Stomach (tissue), 19 donors: ENCODE measurements at regions of chr9 and their contacts with region 1.

Region 1: DNA sequence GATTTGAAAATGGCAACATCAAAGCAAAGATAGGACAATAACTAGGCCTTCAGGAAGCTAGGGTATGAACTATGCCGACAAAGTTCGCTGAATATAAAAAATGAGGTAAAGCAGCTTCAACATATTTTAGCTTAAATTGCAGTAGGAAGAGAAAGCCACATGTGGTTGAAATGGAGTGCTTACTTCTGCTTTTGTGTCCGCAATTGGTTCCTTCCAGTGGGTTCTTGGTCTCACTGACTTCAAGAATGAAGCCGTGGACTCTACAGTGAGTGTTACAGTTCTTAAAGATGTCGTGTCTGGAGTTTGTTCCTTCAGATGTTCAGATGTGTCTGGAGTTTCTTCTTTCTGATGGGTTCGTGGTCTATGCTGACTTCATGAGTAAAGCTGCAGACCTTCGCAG is 95.2 kb downstream of the APTX start:
- DNase-seq: no peak
- H3K4me3 ChIP-seq: no peak overlapping the region
- H3K27ac ChIP-seq: no peak overlapping the region
- H3K4me1 ChIP-seq: no peaks in the 10 kb centered on the region
- H3K27me3 ChIP-seq: no peaks in the 10 kb centered on the region
- CTCF ChIP-seq: no peak
- EP300 ChIP-seq: no peak
- POLR2A ChIP-seq: no peak

Region 2: GRCh38 chr9:32571969-32572899 is 334.0 kb before region 1 on chr9:
- intact Hi-C with region 1: no loop called
- DNase-seq: peak; percentile 62 to 93
- H3K4me3 ChIP-seq: peak overlapping the region; percentile 73 to 98 (median 79)
- H3K27ac ChIP-seq: peak overlapping the region; percentile 91 to 98 (median 93)
- H3K4me1 ChIP-seq: peaks cover 0 to 38% (median 22%) of the 10 kb centered on the region in 4 donors
- H3K27me3 ChIP-seq: no peaks in the 10 kb centered on the region
- CTCF ChIP-seq: peak in 5 of 7 experiments; percentile 26 to 59 (median 39)
- EP300 ChIP-seq: no peak
- POLR2A ChIP-seq: no peak

Region 3: DNA sequence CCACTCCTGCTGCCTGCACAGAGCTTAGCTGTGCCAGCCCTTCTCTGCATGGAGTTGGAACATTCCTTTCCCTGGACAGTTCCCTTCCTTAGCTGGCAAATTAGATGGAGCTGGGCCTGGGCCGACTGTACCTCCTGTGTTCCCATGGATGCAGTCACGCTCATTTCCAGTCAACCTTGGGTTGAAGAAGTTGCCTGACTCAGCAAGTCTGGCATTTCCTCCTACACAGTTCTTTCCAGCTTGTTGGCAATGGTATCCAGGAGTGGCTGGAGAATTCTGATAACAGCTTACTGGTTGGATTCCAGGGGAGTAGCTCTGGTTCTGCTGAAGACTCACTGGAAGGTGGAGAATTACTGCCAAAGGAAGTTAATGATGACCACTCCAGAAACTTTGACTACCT is 261.5 kb before region 1 on chr9:
- intact Hi-C with region 1: loop called (anchors 5 kb)
- DNase-seq: no peak
- H3K4me3 ChIP-seq: no peak overlapping the region
- H3K27ac ChIP-seq: no peak overlapping the region
- H3K4me1 ChIP-seq: no peaks in the 10 kb centered on the region
- H3K27me3 ChIP-seq: no peaks in the 10 kb centered on the region
- CTCF ChIP-seq: no peak
- EP300 ChIP-seq: no peak
- POLR2A ChIP-seq: no peak